ENCODE measurements at regions of chr4 and their contacts with region 1.

Region 1: GRCh38 chr4:138680989-138681604 is 334.5 kb upstream of the NOCT start:
- DNase-seq: peak; percentile 42
- H3K4me3 Mint-ChIP-seq: no peak overlapping the region
- H3K27ac Mint-ChIP-seq: no peak overlapping the region
- H3K4me1 Mint-ChIP-seq: no peaks in the 10 kb centered on the region
- H3K27me3 Mint-ChIP-seq: peaks cover 16% of the 10 kb centered on the region

Region 2: DNA sequence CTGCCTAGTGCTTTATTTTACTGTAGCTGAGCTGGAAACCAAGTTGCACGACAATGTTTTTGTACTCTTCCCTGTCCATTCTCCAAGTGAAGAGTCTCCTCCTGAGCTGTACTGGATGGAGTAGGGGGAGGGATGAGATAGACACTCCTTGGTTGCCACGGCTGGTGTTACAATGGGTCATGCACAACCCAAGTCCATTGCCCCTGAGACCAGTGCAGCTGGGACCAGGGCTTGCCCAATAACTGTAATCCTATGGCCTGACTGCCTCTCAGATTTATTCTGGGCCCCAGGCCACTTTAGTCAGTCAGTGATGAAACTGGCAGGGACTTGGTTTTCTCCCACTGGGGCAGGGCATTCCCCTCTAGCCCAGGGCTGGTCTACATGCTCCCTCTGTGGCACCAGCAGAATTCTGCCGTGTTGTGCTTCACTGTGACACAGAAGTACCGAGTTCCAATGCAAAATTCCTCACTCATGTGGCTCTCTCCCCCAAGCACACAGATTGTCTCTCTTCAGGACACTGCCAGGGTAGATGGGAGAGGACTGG is 945.5 kb before region 1 on chr4:
- intact Hi-C with region 1: loop called (anchors 5 kb)
- DNase-seq: no peak
- H3K4me3 Mint-ChIP-seq: no peak overlapping the region
- H3K27ac Mint-ChIP-seq: no peak overlapping the region
- H3K4me1 Mint-ChIP-seq: no peaks in the 10 kb centered on the region
- H3K27me3 Mint-ChIP-seq: no peaks in the 10 kb centered on the region

Region 3: DNA sequence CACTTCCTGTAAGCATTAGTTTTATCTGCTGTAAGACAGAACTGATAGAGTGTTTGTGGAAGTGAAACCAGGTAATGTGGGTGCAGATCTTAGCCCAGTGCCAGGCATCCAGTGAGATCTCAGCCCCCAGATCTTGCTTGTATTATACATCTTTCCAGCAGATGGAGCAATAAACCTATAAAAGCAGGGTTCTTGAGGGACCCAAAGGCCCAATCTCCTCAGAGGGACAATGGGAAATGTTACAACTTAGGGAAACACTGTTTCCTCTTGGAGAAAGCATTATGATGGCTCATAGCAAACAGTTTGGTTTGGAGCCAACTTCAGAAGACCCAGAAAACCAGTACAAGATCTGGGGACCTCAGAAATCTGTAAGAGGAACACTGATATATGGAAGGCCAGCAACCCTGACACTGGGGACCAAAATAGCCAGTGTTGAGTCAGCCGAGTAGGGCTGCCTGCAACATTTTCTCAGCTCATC is 645.3 kb before region 1 on chr4:
- intact Hi-C with region 1: loop called (anchors 1 kb)
- DNase-seq: no peak
- H3K4me3 Mint-ChIP-seq: no peak overlapping the region
- H3K27ac Mint-ChIP-seq: no peak overlapping the region
- H3K4me1 Mint-ChIP-seq: no peaks in the 10 kb centered on the region
- H3K27me3 Mint-ChIP-seq: no peaks in the 10 kb centered on the region

Region 4: DNA sequence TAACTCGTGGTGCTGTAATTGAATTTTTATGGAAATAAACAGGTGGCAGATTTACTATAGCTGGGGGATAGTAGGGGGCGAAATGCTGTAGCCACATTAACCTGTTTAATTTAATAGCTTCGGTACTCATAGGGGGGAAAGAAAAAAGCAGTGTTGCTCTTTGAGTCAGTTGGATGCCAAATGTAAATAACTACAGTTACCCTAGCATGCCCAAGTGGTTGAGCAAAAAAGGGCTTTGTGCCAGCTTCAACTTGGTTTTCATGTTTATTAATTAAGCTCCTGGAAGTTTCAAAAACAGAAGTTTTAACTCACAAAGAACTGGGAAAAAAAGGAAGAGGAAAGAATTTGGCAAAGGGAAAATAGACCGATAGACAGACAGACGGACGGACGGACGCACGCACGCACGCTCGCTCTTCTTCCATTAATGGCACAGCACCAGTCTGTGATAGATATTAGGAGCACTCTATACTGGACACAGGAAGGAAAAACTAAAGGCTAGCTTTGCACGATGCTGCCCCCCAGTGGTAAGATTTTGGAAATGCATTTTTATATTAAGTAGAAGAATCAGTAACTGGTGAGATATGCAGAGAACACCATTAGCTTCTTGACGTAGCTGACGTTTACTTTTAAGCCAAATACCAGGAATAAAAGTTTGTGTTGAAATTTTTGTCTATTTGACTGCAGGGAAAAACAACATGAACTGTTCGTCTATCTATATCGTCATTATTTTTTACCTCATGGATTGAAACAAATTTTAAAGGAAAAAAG is 590.8 kb before region 1 on chr4:
- intact Hi-C with region 1: loop called (anchors 5 kb)
- DNase-seq: no peak
- H3K4me3 Mint-ChIP-seq: no peak overlapping the region
- H3K27ac Mint-ChIP-seq: no peak overlapping the region
- H3K4me1 Mint-ChIP-seq: no peaks in the 10 kb centered on the region
- H3K27me3 Mint-ChIP-seq: no peaks in the 10 kb centered on the region

Region 5: DNA sequence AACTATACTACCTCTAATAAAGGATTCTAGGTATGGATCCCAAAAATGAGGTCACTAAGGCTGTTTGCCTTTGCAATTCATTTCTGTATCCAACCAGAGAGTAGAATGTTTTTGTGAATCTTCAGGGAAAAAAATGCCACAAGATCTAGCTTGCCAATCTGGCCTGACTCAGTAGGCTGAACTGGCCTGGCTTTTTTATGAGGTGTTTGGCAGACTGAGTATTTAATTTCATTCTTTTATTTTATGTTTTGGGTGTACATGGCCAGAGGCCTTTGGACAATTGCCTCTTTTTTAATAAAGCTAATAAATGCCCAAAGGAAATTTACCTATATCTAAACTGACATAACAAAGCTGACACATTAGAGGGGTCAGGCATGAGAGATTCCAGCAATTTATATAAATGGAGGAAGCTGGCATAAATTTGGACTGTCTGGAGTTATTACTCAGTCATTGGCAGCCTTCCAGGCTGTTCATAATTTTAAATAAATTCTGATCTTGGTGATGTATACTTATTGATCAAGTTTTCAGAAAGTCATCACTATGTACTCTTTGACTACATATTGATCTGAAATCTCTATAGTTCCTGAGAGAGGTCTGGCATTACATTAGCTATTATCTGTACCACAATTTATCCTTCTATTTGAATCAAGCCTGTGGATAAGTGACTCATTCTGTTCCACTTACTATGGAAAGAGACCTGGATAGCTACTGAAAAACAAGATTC is 41.9 kb before region 1 on chr4:
- intact Hi-C with region 1: no loop called
- DNase-seq: no peak
- H3K4me3 Mint-ChIP-seq: no peak overlapping the region
- H3K27ac Mint-ChIP-seq: no peak overlapping the region
- H3K4me1 Mint-ChIP-seq: no peaks in the 10 kb centered on the region
- H3K27me3 Mint-ChIP-seq: no peaks in the 10 kb centered on the region

Region 6: GRCh38 chr4:138870737-138871554 is 189.8 kb after region 1 on chr4:
- intact Hi-C with region 1: loop called (anchors 10 kb)
- DNase-seq: no peak
- H3K4me3 Mint-ChIP-seq: no peak overlapping the region
- H3K27ac Mint-ChIP-seq: no peak overlapping the region
- H3K4me1 Mint-ChIP-seq: no peaks in the 10 kb centered on the region
- H3K27me3 Mint-ChIP-seq: peaks cover 5% of the 10 kb centered on the region